ENCODE measurements at regions of chr12 and their contacts with region 1.

Region 1: GRCh38 chr12:68497702-68498101 is 113.0 kb upstream of the RAP1B start:
- DNase-seq: no peak
- H3K4me3 Mint-ChIP-seq: peak overlapping the region; percentile 66
- H3K27ac Mint-ChIP-seq: peak overlapping the region; percentile 94
- H3K4me1 Mint-ChIP-seq: peaks cover 40% of the 10 kb centered on the region
- H3K27me3 Mint-ChIP-seq: no peaks in the 10 kb centered on the region

Region 2: DNA sequence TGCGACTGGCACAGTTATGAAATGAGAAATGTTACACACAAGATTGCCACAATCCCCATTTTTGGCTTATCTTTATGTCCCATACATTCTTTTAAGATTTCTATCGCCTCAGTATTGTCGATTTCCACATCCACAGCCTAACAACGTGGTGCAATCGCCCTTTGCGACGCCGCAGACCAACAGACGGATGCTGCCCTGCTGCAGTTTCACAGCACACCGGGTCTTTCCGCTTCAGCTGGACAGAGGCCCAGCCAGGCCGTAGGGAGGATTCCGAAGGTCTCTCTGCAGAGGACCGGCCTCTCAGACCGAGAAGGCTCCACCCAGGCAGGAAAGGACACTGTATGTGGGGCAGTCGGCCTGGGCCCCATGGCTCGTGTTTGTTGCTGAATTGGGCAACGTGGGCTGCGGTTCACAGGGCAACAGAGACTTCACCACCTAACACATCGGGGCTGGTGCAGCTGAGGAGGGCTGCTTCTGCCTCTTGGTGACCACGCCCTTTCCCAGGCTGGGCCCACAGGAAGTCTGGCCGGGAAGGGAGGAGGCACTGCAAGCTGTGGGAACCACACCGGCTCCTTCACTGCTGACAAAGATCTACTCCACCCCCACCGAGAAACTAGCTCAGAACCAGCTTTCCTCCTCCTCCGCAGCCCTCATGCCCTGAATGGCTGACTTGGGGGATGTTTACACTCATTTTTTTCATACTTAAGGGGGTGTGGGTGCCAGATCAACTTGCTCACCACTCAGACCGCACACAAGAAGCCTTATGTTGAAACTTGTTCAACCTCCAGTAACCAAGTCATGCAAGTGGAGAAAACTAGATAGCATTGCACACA is 132.6 kb before region 1 on chr12:
- intact Hi-C with region 1: loop called (anchors 1 kb)
- DNase-seq: peak; percentile 85
- H3K4me3 Mint-ChIP-seq: peak overlapping the region; percentile 77
- H3K27ac Mint-ChIP-seq: peak overlapping the region; percentile 92
- H3K4me1 Mint-ChIP-seq: peaks cover 76% of the 10 kb centered on the region
- H3K27me3 Mint-ChIP-seq: no peaks in the 10 kb centered on the region

Region 3: GRCh38 chr12:68482660-68483059 is 15.0 kb before region 1 on chr12:
- intact Hi-C with region 1: loop called (anchors 1 kb)
- DNase-seq: peak; percentile 44
- H3K4me3 Mint-ChIP-seq: peak overlapping the region; percentile 66
- H3K27ac Mint-ChIP-seq: peak overlapping the region; percentile 91
- H3K4me1 Mint-ChIP-seq: peaks cover 69% of the 10 kb centered on the region
- H3K27me3 Mint-ChIP-seq: no peaks in the 10 kb centered on the region

Region 4: GRCh38 chr12:68641138-68641537 is 143.4 kb after region 1 on chr12:
- intact Hi-C with region 1: loop called (anchors 1 kb)
- DNase-seq: peak; percentile 36
- H3K4me3 Mint-ChIP-seq: peak overlapping the region; percentile 61
- H3K27ac Mint-ChIP-seq: peak overlapping the region; percentile 71
- H3K4me1 Mint-ChIP-seq: peaks cover 63% of the 10 kb centered on the region
- H3K27me3 Mint-ChIP-seq: no peaks in the 10 kb centered on the region